Activated CD4-positive, alpha-beta memory T cell treated with anti-CD3 and anti-CD28 coated beads for 36 hours (primary cell): ENCODE measurements at regions of chr12 and their contacts with region 1.

Region 1: GRCh38 chr12:126874427-126875026 is 1392.4 kb upstream of the TMEM132C start:
- DNase-seq: peak; percentile 71
- H3K4me3 Mint-ChIP-seq: no peak overlapping the region
- H3K27ac Mint-ChIP-seq: no peak overlapping the region
- H3K4me1 Mint-ChIP-seq: peaks cover 5% of the 10 kb centered on the region
- H3K27me3 Mint-ChIP-seq: no peaks in the 10 kb centered on the region

Region 2: GRCh38 chr12:125533434-125534029 is 1341.0 kb before region 1 on chr12:
- CTCF ChIA-PET with region 1: no interaction called
- POLR2A ChIA-PET with region 1: no interaction called
- intact Hi-C with region 1: loop called (anchors 5 kb)
- DNase-seq: peak; percentile 37
- H3K4me3 Mint-ChIP-seq: no peak overlapping the region
- H3K27ac Mint-ChIP-seq: no peak overlapping the region
- H3K4me1 Mint-ChIP-seq: no peaks in the 10 kb centered on the region
- H3K27me3 Mint-ChIP-seq: peaks cover 2% of the 10 kb centered on the region

Region 3: GRCh38 chr12:126069549-126070165 is 804.9 kb before region 1 on chr12:
- CTCF ChIA-PET with region 1: interaction called, 38 read pairs
- POLR2A ChIA-PET with region 1: no interaction called
- intact Hi-C with region 1: no loop called
- DNase-seq: peak; percentile 64
- H3K4me3 Mint-ChIP-seq: no peak overlapping the region
- H3K27ac Mint-ChIP-seq: no peak overlapping the region
- H3K4me1 Mint-ChIP-seq: no peaks in the 10 kb centered on the region
- H3K27me3 Mint-ChIP-seq: peaks cover 1% of the 10 kb centered on the region

Region 4: GRCh38 chr12:126784328-126784921 is 90.1 kb before region 1 on chr12:
- CTCF ChIA-PET with region 1: interaction called, 39 read pairs
- POLR2A ChIA-PET with region 1: no interaction called
- intact Hi-C with region 1: loop called (anchors 2 kb)
- DNase-seq: peak; percentile 52
- H3K4me3 Mint-ChIP-seq: no peak overlapping the region
- H3K27ac Mint-ChIP-seq: no peak overlapping the region
- H3K4me1 Mint-ChIP-seq: peaks cover 6% of the 10 kb centered on the region
- H3K27me3 Mint-ChIP-seq: no peaks in the 10 kb centered on the region

Region 5: DNA sequence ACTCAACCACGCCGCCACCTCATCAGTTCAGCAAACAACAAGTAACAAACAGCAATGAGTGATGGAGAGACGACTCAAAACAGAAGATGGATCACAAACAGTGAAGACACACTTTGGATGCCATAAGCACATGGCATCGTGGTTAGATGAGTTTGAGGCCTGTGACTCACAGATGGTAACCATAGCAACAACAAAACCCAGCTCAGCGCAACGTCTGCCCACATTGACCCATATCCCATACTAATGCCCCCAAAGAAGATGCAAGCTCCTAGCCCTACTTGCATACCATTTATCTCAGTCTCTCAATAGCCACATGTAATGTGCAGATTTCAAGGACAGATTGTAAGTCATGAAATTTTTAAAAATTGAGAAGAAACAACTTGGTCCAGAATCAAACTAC is 70.2 kb after region 1 on chr12:
- CTCF ChIA-PET with region 1: no interaction called
- POLR2A ChIA-PET with region 1: no interaction called
- intact Hi-C with region 1: no loop called
- DNase-seq: no peak
- H3K4me3 Mint-ChIP-seq: no peak overlapping the region
- H3K27ac Mint-ChIP-seq: no peak overlapping the region
- H3K4me1 Mint-ChIP-seq: no peaks in the 10 kb centered on the region
- H3K27me3 Mint-ChIP-seq: peaks cover 3% of the 10 kb centered on the region

Region 6: DNA sequence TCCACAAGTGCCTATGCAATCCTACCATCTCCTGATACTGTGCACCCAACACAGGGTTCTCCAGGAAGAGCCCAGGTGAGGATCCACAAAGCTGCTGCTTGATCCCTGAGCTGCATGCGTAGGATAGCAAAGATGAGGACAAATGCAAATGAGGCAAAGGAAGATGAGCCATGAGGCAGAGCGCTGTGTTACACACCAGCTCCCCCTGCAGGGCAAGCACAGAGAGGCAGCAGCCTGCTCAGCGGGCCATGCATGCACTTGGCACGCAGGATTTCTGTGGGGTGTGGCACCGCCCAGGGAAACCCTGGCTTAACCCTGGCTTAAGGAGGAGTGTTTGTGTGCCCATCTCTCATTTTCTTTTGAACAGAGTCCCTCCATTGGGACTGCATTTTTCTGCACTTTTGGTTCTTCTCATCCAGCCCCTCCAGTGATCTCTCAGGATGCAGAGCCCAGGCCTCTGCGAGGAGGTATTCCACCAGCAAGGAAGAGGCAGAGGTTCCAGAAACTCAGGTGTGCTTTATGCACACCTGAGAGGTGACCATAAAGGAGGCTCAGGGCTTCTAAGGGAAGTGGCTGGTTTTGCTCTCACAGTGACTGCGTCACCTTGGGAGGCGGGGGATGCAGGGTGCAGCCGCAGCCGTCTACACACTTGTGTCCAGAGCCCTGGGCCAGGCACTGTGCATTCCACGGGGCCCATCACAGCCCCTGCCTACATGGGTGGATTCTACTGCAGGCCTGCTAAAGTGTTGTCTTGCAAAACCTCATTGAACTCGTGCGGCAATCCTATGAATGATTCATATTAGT is 419.2 kb after region 1 on chr12:
- CTCF ChIA-PET with region 1: no interaction called
- POLR2A ChIA-PET with region 1: no interaction called
- intact Hi-C with region 1: no loop called
- DNase-seq: peak; percentile 64
- H3K4me3 Mint-ChIP-seq: no peak overlapping the region
- H3K27ac Mint-ChIP-seq: no peak overlapping the region
- H3K4me1 Mint-ChIP-seq: no peaks in the 10 kb centered on the region
- H3K27me3 Mint-ChIP-seq: peaks cover 3% of the 10 kb centered on the region

Region 7: DNA sequence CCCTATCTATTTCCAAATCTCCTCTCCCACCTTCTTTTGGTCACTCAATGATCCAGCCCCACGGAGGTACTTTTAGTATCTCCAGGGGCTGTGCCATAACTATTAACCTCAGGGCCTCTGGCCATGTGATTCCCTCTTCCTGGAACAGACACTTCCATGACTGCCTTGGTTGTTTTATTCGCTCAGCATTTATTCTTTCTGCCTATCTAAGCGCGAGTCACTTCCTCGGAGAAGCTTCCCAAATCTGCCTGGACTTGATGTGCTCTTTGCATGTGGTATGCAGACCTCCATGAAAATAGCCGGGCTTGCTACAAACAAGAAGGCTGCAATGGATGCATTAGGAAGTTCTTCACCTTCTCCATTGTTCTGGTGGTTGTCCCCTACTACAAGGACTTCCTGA is 453.5 kb after region 1 on chr12:
- CTCF ChIA-PET with region 1: no interaction called
- POLR2A ChIA-PET with region 1: no interaction called
- intact Hi-C with region 1: no loop called
- DNase-seq: no peak
- H3K4me3 Mint-ChIP-seq: no peak overlapping the region
- H3K27ac Mint-ChIP-seq: no peak overlapping the region
- H3K4me1 Mint-ChIP-seq: no peaks in the 10 kb centered on the region
- H3K27me3 Mint-ChIP-seq: no peaks in the 10 kb centered on the region

Region 8: DNA sequence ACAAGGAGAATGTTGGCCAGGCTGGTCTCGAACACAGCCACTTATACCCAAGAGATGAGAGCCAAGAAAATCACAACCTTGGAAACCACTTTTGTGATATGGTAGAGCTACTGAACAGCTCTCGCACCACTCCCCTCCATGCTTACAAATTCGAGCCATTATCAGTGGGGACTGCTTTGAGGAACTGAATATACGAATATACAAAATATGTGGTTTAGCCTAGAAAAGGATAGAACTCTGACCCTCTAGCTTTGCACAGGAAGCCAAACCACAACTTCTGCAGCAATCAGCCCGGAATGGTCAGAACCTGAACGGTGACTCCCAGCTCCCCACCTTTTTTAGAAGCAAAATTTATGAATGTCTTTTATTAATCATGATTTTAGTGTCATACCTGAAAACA is 1262.6 kb after region 1 on chr12:
- CTCF ChIA-PET with region 1: no interaction called
- POLR2A ChIA-PET with region 1: no interaction called
- intact Hi-C with region 1: no loop called
- DNase-seq: no peak
- H3K4me3 Mint-ChIP-seq: no peak overlapping the region
- H3K27ac Mint-ChIP-seq: no peak overlapping the region
- H3K4me1 Mint-ChIP-seq: no peaks in the 10 kb centered on the region
- H3K27me3 Mint-ChIP-seq: no peaks in the 10 kb centered on the region